Ascending aorta (tissue), 2 donors: ENCODE measurements at regions of chr6 and their contacts with region 1.

Region 1: DNA sequence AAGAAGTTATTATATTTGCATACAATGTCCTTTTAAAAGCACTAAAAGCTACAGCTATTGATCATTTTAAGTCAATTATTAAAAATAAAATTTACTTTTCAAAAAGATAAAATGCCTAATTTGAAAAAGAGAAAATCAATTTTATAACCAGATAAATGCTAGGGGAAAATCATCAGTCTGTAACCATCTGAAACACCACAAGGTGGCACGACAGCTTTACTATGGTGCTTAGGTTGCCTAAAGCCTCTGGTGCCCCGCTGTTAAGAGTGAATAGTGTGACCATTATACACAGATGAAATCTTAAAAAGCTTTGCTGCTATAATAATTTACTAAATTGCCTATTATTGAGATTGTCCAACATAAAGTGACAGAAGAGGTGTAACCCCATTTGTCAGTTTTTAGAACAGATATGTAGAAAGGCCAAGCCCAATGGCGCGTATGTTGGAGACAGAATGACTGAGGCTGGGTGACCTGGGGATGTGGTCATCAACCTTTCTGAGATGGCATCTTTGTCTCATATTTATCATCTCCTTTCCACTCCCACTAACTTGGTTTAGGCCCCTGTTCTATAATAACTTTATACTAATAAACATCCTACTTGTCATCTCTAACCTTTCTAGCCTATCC is 100.8 kb downstream of the MOXD1 start:
- DNase-seq: no peak
- H3K4me3 ChIP-seq: no peak overlapping the region
- H3K27ac ChIP-seq: no peak overlapping the region
- H3K4me1 ChIP-seq: no peaks in the 10 kb centered on the region
- H3K27me3 ChIP-seq: no peaks in the 10 kb centered on the region
- CTCF ChIP-seq: peak in 2 of 3 experiments; percentile 29 to 51

Region 2: DNA sequence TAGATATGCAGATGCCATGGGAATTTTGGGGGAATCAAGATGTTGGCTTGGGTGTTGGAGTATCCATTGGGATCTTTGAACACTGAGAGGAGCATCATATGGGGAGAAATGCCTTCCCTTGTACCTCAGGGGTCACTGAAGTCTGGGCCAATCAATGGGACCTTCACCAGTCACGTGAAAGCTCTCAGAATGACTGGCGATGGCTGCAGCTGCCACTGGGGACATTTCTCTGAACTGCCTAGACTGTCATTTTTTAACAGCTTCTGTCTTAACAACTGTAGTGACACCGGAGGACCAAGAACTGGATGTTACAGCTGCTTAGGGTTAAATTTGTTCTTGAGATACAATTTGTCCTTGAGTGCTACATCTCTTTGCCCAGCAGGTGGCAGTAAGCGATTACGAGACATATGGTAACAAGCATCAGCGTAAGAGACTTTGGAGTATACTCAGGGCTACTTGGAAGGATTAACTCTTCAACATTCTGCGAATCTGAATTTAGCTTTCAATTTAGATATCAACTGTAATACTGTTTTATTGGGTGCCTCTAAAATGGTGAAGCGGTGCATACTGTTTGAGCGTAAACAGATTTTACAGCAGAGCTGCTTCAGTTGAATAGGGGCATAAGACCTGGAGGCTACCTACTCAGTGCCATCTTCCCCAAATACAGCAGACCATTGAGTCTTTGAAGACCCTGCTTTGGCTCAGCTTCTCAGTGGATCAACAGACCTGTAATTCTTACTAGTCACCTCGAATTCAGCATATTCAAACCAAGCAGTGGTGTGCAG is 385.3 kb before region 1 on chr6:
- intact Hi-C with region 1: loop called (anchors 2 kb)
- DNase-seq: peak in 1 of 2 donors; percentile 81
- H3K4me3 ChIP-seq: no peak overlapping the region
- H3K27ac ChIP-seq: no peak overlapping the region
- H3K4me1 ChIP-seq: no peaks in the 10 kb centered on the region
- H3K27me3 ChIP-seq: no peaks in the 10 kb centered on the region
- CTCF ChIP-seq: peak; percentile 40 to 85 (median 82)

Region 3: DNA sequence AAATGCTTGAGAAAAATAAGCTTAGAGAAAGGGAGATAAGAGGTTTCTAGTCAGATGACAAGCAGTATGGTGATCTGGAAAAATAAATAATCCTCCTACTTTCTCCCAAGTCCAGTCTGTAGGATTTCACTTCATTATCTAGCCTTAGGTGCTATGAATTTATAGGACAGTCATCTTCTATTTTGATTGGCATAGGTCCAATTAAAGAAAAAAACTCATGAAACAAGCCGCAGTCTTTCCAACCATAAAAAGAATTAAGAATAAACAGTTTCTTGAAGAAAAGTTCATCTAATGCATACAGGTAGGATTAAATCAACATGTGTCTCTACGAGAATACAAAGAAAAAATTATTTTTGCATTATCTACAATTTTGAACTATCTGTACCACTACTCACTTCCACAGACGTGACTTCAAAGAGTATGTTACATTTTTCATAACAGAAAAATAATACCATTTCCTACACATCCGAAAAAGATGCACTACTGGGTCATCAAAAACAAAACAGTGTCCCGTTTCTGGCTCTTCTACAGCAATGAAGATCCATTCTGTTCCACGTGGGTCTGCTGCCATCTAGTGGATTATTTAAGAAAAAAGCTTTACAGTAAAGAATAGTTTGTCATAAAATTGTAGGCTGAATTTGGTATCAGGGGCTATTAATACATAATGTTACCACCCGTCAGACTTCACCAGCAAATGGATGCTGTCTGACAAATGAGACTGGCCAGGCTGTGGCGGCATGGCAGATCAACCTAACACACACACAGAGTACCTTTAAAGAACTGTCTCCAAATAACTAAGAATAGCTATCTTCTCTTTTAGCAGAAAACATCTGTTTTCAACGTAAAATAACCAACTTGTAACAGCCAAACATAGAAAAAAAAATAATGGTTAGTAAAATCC is 183.6 kb after region 1 on chr6:
- intact Hi-C with region 1: loop called (anchors 5 kb)
- DNase-seq: no peak
- H3K4me3 ChIP-seq: no peak overlapping the region
- H3K27ac ChIP-seq: no peak overlapping the region
- H3K4me1 ChIP-seq: peaks cover 0 to 12% of the 10 kb centered on the region in 2 donors
- H3K27me3 ChIP-seq: no peaks in the 10 kb centered on the region
- CTCF ChIP-seq: peak; percentile 60 to 78 (median 74)